ENCODE measurements at regions of chr15 and their contacts with region 1.

Region 1: DNA sequence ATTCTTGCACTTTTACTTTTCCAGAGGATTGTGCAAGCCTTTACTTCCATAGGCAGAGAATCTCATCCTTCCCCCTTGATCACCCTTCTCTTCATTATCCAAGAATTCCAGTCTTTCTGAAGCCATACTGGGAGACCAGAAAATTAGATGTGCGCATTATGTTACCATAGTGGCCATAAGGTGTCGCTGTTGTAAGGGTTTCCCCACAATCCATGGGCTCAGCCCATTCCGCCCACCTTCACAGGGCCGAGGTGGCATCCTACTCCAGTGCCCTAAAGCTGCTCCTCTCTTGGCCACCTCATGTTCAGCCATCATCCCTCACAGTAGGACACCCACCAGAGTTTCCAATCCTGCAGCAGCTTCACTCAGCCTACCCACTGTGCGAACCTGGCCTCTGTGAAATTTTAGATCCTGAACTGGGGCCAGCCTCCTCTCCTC is 35.0 kb downstream of the CTSH start:
- DNase-seq: no peak
- ATAC-seq: peak; percentile 48

Region 2: DNA sequence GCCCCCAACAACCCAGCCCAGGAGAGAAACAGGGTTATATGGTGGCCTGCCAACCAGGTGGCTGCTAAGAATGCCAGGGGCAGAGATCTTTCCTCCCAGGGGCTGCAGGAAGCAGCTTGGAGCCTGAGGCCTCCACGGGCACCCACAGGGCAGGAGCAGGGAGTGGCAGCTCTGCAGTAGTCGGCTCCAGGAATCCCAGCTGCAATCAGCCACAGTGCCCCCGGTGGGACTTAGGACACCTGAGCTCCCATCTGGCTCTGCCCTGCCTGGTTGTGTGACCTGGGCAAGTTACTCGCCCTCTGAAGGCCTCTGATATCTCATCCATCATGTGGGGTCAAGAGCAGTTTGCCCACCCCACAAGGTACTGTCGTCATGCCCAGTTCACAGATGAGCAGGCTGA is 114.1 kb before region 1 on chr15:
- intact Hi-C with region 1: no loop called
- DNase-seq: no peak
- ATAC-seq: no peak

Region 3: DNA sequence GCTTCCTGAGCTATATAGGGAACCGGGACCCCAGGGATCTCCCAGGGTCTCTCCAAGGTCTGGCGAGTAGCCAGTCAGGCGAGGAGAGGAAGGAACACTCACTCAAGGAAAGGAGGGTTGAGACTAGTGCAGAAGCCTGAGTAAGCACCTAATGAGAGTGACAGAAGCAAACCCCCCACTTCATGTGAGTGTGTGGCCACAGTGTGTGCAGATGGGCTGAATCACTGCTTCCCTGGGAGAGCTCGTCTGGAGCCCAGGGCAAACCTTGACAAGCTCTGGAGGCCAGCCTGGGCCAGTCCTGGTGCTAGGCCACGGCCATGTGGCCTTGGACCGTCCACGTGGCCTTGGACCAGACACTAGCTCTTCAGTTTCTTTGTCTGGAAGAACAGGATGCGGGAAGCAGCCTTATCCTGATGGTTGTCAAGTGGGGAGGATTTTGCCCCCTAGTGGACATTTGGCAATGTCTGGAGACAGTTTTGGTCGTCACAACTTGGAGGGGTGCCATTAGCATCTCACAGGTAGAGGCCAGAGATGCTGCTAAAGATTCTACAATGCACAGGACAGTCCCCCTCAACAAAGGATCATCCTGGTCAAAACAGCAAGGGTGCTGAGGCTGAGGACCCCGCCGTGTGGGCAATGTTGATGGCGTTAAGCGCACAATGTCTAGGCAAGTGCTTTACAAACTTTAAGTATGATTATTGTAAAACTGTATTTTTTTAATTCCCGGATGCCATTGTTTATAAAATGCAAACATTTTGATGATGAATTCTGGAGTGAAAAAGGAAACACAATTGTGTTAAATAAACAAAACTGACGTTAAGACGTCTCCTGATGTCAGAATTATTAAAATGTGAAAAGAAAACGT is 69.9 kb after region 1 on chr15:
- intact Hi-C with region 1: loop called (anchors 10 kb)
- DNase-seq: no peak
- ATAC-seq: peak; percentile 60

Region 4: GRCh38 chr15:79004336-79004735 is 94.5 kb after region 1 on chr15:
- intact Hi-C with region 1: loop called (anchors 10 kb)
- DNase-seq: no peak
- ATAC-seq: peak; percentile 42

Region 5: DNA sequence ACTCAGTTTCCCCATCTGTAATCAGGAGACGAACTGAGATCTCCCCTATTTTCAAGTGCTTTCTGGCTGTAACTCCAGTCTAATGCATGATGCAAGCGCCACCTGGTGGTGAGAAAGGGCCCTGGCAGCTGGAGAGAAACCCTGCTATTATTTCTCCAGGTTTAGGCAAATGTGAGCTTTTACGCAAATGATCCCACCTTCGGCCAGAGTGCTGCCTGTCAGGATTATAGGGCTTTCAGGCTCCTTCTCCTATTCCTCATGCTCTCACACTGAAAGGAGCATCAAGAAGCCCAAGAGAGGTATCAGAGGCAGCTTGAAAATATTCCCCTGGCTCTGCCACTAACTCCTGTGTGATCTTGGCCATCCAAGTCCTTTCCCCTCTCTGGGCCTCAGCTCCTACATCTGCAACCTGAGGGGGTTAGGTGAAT is 274.7 kb after region 1 on chr15:
- intact Hi-C with region 1: loop called (anchors 5 kb)
- DNase-seq: peak; percentile 84
- ATAC-seq: peak; percentile 78